CD14-positive monocyte (primary cell): ENCODE measurements at regions of chr20 and their contacts with region 1.

Region 1: GRCh38 chr20:63908008-63908624 is 13.2 kb downstream of the DNAJC5 start:
- DNase-seq: no peak
- H3K4me3 ChIP-seq: no peak overlapping the region
- H3K4me3 Mint-ChIP-seq: no peak overlapping the region
- H3K27ac ChIP-seq: peak overlapping the region; percentile 20 to 71
- H3K27ac Mint-ChIP-seq: peak overlapping the region; percentile 13 to 78 (median 59)
- H3K4me1 ChIP-seq: peaks cover 50 to 63% of the 10 kb centered on the region in 2 donors
- H3K4me1 Mint-ChIP-seq: peaks cover 74% of the 10 kb centered on the region
- H3K27me3 ChIP-seq: no peaks in the 10 kb centered on the region
- H3K27me3 Mint-ChIP-seq: no peaks in the 10 kb centered on the region
- CTCF ChIP-seq: no peak

Region 2: DNA sequence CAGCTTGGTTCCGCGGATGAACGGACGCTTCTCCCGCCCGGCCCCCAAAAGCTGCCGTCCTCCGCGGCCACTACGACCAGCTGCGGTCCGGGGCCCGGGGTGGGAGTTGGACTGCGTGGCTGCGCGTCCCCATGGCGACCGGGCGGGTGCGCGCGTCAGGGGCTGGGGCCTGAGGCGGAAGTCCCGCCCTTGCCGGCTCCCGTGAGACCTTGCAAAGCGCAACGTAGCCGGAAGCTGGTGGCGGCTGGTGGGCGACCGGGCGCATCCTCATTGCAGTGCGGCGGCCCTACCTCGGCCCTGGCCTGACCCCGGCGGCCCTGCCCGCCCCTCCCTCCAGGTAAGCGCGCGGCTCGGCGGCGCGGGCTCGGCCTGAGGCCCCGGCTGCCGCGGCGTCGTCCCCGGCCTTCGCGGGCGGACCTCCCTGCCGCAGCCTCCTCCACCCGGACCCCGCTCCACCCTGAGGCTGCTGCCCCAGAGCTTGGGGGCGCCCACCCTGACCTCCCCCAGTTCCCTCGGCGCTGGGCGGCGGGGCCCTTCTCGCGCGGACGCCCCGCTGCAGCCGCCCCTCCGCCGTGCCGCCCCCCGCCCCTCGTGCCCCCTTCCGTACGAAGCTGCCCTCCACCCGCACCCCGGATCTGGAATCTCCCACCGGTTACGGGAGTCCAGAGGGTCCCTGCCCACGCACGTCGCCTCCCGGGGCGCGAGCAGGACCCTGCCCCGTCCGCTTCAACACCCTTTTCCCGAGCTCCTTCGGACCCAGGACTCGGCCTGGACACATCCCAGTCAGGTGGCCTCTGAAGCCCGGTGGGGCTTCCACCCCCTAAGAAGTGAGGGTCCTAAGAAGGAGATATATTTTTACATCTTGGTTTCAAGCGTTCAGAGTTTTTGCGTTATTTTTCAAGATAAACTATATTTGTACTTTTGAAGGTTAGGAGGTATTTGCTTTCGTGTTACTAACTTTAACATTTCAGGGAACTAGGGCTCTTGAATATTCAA is 635.2 kb before region 1 on chr20 and contains the start of gene ARFGAP1:
- intact Hi-C with region 1: loop called in 1 of 2 experiments (anchors 10 kb)
- DNase-seq: peak; percentile 80 to 86 (median 84)
- H3K4me3 ChIP-seq: peak within 1 kb of the TSS; percentile 75 to 87 (median 87)
- H3K4me3 Mint-ChIP-seq: peak within 1 kb of the TSS; percentile 84 to 91
- H3K27ac ChIP-seq: peak within 1 kb of the TSS; percentile 56 to 84
- H3K27ac Mint-ChIP-seq: peak within 1 kb of the TSS; percentile 74 to 93 (median 86)
- H3K4me1 ChIP-seq: peaks cover 17 to 19% of the 10 kb centered on the region in 2 donors
- H3K4me1 Mint-ChIP-seq: peaks cover 22% of the 10 kb centered on the region
- H3K27me3 ChIP-seq: peaks cover 0 to 3% of the 10 kb centered on the region in 2 donors
- H3K27me3 Mint-ChIP-seq: peaks cover 1 to 18% (median 8%) of the 10 kb centered on the region in 3 donors
- CTCF ChIP-seq: no peak
- polyA plus RNA-seq, gene ARFGAP1: 11.2 to 99.8 (median 14.1) TPM

Region 3: GRCh38 chr20:63942250-63942959 is 34.3 kb after region 1 on chr20:
- intact Hi-C with region 1: loop called in 1 of 2 experiments (anchors 5 kb)
- DNase-seq: peak; percentile 42 to 72 (median 67)
- H3K4me3 ChIP-seq: no peak overlapping the region
- H3K4me3 Mint-ChIP-seq: peak overlapping the region in 1 of 2 donors; percentile 80
- H3K27ac ChIP-seq: peak overlapping the region; percentile 24 to 47
- H3K27ac Mint-ChIP-seq: peak overlapping the region; percentile 70 to 93 (median 87)
- H3K4me1 ChIP-seq: peaks cover 35 to 42% of the 10 kb centered on the region in 2 donors
- H3K4me1 Mint-ChIP-seq: peaks cover 31% of the 10 kb centered on the region
- H3K27me3 ChIP-seq: no peaks in the 10 kb centered on the region
- H3K27me3 Mint-ChIP-seq: no peaks in the 10 kb centered on the region
- CTCF ChIP-seq: no peak

Region 4: DNA sequence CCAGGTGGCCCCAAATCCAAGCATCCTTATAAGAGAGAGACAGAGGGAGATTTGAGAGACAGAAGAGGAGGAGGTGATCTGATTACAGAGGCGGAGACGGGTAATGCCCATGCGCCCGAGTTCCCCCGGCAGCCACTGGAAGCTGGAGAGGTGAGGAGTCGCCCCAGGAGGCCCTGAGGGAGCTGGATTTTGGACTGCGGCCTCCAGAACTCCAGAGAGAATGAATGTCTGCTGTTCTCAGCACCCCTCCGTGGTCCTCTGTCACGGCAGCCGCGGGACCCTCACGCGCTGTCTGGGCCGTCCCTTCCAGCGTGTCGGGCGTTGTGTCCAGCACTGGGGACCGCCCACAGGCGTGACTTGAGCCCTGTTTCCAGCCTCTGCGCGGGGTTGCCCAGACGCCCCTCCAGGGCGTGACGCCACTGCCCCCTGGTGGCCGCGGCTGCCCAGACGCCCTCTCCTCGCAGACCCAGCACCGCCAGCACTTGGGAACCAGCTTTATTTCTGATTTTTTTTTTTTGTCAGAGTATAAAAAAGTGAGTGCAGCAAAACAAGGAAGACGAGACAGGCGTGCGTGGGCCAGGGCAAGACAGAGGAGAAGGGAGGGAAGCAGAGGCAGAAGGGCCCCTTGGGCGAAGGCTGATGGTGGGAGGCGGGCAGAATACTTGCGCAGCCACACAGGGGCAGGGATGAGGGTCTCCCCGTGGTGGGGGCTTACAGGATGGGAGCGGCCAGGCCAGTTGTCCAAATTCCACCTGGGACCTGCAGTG is 65.7 kb after region 1 on chr20:
- intact Hi-C with region 1: loop called (anchors 5 kb)
- DNase-seq: peak; percentile 79 to 83 (median 80)
- H3K4me3 ChIP-seq: peak overlapping the region in 1 of 3 experiments; percentile 42
- H3K4me3 Mint-ChIP-seq: peak overlapping the region in 1 of 2 donors; percentile 46
- H3K27ac ChIP-seq: no peak overlapping the region
- H3K27ac Mint-ChIP-seq: peak overlapping the region in 2 of 7 donors; percentile 0 to 77
- H3K4me1 ChIP-seq: peaks cover 23 to 40% of the 10 kb centered on the region in 2 donors
- H3K4me1 Mint-ChIP-seq: peaks cover 30% of the 10 kb centered on the region
- H3K27me3 ChIP-seq: peaks cover 0 to 20% of the 10 kb centered on the region in 2 donors
- H3K27me3 Mint-ChIP-seq: peaks cover 20 to 35% (median 20%) of the 10 kb centered on the region in 3 donors
- CTCF ChIP-seq: peak; percentile 98

Region 5: GRCh38 chr20:63980806-63981728 is 73.0 kb after region 1 on chr20 and contains the start of gene PRPF6:
- intact Hi-C with region 1: loop called in 1 of 2 experiments (anchors 2 kb)
- DNase-seq: peak; percentile 96
- H3K4me3 ChIP-seq: peak within 1 kb of the TSS; percentile 65 to 83 (median 76)
- H3K4me3 Mint-ChIP-seq: peak within 1 kb of the TSS; percentile 83 to 92
- H3K27ac ChIP-seq: peak within 1 kb of the TSS; percentile 50 to 89
- H3K27ac Mint-ChIP-seq: peak within 1 kb of the TSS; percentile 82 to 95 (median 91)
- H3K4me1 ChIP-seq: peaks cover 32 to 48% of the 10 kb centered on the region in 2 donors
- H3K4me1 Mint-ChIP-seq: peaks cover 40% of the 10 kb centered on the region
- H3K27me3 ChIP-seq: peaks cover 0 to 5% of the 10 kb centered on the region in 2 donors
- H3K27me3 Mint-ChIP-seq: peaks cover 3 to 11% (median 10%) of the 10 kb centered on the region in 3 donors
- CTCF ChIP-seq: peak; percentile 86
- polyA plus RNA-seq, gene PRPF6: 29.1 to 47.7 (median 34.5) TPM